IMR-90 (cell line): ENCODE measurements at regions of chr10 and their contacts with region 1.

Region 1: GRCh38 chr10:43055991-43056567 is 20.8 kb upstream of the RET start:
- DNase-seq: no peak
- ATAC-seq: no peak
- H3K4me3 ChIP-seq: no peak overlapping the region
- H3K27ac ChIP-seq: no peak overlapping the region
- H3K4me1 ChIP-seq: no peaks in the 10 kb centered on the region
- H3K27me3 ChIP-seq: peaks cover 12% of the 10 kb centered on the region
- CTCF ChIP-seq: no peak
- POLR2A ChIP-seq: no peak
- RAD21 ChIP-seq: no peak

Region 2: GRCh38 chr10:42875792-42876460 is 180.2 kb before region 1 on chr10:
- CTCF ChIA-PET with region 1: no interaction called
- POLR2A ChIA-PET with region 1: no interaction called
- dilution Hi-C with region 1: no loop called
- in situ Hi-C with region 1: loop called (anchors 25 kb)
- intact Hi-C with region 1: no loop called
- DNase-seq: peak; percentile 10
- ATAC-seq: peak; percentile 79
- H3K4me3 ChIP-seq: no peak overlapping the region
- H3K27ac ChIP-seq: no peak overlapping the region
- H3K4me1 ChIP-seq: no peaks in the 10 kb centered on the region
- H3K27me3 ChIP-seq: peaks cover 2% of the 10 kb centered on the region; the same call in 1 of the 2 replicates
- CTCF ChIP-seq: no peak
- POLR2A ChIP-seq: no peak
- RAD21 ChIP-seq: no peak

Region 3: GRCh38 chr10:43000651-43001423 is 55.2 kb before region 1 on chr10:
- CTCF ChIA-PET with region 1: no interaction called
- POLR2A ChIA-PET with region 1: no interaction called
- dilution Hi-C with region 1: no loop called
- in situ Hi-C with region 1: no loop called
- intact Hi-C with region 1: no loop called
- DNase-seq: no peak
- ATAC-seq: no peak
- H3K4me3 ChIP-seq: no peak overlapping the region
- H3K27ac ChIP-seq: no peak overlapping the region
- H3K4me1 ChIP-seq: no peaks in the 10 kb centered on the region
- H3K27me3 ChIP-seq: no peaks in the 10 kb centered on the region; the same call in 1 of the 2 replicates
- CTCF ChIP-seq: no peak
- POLR2A ChIP-seq: no peak
- RAD21 ChIP-seq: no peak

Region 4: DNA sequence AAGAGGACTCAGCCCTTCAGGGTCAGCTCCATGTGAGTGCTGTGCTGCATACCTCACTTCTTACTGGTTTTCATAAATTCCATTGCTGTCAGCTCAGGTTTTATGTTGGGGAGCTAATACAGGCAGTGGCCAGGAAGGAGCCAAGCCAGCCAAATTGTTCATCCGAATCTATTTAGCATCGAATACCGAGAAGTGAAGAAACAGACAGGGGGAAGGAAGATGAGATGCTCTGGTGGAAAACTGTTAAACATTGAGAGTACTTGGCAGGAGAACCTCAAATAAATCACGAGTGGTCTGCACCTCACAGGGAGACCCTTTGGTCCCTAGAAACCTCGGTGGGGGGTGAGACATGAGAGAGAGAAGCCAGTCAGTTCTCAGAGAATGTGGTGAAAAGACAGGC is 1659.1 kb after region 1 on chr10:
- CTCF ChIA-PET with region 1: no interaction called
- POLR2A ChIA-PET with region 1: no interaction called
- dilution Hi-C with region 1: no loop called
- in situ Hi-C with region 1: no loop called
- intact Hi-C with region 1: no loop called
- DNase-seq: peak; percentile 76
- ATAC-seq: peak; percentile 80
- H3K4me3 ChIP-seq: no peak overlapping the region
- H3K27ac ChIP-seq: no peak overlapping the region
- H3K4me1 ChIP-seq: peaks cover 9% of the 10 kb centered on the region
- H3K27me3 ChIP-seq: no peaks in the 10 kb centered on the region
- CTCF ChIP-seq: no peak
- POLR2A ChIP-seq: no peak
- RAD21 ChIP-seq: no peak